ENCODE measurements at regions of chr18 and their contacts with region 1.

Region 1: DNA sequence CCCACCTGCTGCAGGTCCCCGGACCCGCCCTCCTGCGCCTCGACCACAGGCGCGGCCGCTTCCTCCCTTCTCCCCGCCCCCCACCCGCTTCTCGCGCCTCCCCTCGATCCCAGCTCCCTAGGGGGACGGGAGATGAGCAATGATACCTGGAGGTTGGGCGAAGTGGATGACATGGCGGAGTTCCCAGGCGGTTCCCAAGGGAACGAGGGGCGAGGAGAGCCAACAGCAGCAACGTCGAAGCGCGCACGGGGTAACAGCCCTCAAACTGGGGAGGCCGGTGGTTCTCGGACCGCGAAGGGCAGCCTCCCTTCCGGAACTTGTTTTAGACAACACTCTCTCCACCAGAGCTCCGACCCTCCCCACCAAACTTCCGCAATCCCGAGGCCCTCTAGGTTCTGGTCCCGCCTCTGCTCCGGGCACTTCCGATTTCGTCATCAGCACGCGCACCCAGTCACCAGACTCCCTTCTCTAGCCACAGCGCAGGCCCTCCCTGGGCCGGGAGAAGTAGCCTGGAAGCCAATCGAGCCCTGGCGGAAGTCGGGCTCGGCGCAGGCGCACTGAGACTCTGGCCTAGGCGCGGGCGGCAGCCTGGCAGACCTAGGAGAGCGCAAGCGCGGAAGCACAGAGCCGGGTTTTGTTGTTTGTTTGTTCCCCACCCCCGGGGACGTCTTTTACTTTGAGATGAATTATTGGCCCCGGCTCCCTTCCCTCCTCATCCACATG is at the start of gene VPS4B:
- DNase-seq: peak; percentile 95 to 100 (median 99)

Region 2: DNA sequence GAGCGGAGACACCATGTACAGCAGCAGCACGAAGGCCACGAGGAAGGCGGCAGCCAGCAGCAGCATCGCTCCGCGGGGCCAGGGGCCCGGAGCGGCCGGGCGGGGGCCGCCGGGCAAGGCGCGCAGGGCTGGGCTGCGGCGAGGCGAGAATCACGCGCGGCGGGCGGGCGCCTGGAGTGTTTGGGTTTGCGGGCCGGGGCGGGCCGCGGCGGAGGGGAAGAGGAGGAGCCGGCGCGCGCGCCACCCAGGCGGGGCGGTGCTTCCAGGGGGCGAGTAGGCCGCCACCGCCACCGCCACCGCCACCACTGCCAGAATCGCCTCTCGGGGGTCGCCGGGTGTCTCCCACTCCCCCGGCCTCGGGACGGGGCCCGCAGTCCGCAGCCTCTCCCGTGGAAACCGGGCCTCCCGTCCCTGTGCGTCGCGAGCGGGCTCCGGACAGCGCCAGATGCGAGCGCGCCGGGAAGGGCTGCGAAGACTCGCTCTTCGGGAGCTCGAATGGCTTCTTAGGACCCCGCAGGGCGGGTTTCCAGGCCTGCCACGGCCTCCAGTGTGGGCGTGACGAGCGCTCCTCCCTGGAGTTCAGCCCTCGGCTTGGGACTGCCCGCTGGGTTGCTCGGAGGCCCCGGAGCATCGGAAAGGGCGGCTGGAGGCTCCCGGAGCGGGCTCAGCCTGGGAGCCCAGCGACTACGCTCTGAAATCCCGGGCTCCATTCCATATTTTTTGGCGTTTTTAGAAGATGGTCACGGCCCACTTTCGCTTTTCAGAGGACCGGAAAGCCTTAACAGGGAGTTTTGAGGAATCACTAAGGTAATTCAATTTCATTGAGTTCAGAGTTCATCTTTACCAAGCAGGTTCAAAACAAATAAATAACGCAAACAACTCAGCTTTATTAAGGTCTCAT is 54.9 kb before region 1 on chr18 and contains the start of gene KDSR:
- intact Hi-C with region 1: loop called (anchors 1 kb)
- DNase-seq: peak; percentile 82 to 98 (median 94)

Region 3: DNA sequence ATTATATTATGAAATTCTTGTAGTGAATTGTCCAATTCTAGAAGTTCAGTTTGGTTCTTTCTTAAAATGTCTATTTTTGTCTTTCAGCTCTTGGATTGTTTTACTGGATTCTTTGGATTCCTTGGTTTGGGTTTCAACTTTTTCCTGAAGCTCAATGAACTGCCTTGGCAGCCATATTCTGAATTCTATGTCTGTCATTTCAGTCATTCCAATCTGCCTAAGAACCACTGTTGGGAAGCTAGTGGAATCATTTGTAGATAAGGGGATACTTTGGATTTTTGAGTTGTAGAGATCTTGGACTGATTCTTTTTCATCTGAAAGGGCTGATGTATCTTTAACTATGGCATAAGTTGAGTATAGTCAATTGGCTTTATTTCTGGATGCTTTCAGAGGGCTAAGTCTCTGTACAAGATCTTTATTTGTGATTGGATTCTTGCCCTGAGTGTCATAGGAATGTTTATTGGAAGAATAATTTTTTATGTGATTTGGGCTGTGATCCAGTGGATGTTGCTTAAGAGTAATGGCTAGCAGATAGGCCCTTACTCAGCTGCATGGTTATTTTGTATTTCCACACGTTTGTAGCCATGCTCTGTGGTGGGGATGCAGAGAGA is 395.3 kb after region 1 on chr18:
- intact Hi-C with region 1: no loop called
- DNase-seq: no peak

Measured in head of caudate nucleus (tissue), 42 donors.